HepG2 (cell line): ENCODE measurements at regions of chr4 and their contacts with region 1.

Region 1: GRCh38 chr4:185591679-185592141 is 56.4 kb upstream of the PDLIM3 start:
- DNase-seq: peak; percentile 75
- ATAC-seq: peak; percentile 86
- H3K4me3 ChIP-seq: no peak overlapping the region
- H3K27ac ChIP-seq: peak overlapping the region; percentile 51
- H3K4me1 ChIP-seq: peaks cover 18% of the 10 kb centered on the region
- H3K27me3 ChIP-seq: no peaks in the 10 kb centered on the region
- CTCF ChIP-seq: no peak
- EP300 ChIP-seq: peak in 1 of 2 experiments; percentile 36; a peak in 1 of 4 replicates
- POLR2A ChIP-seq: no peak
- RAD21 ChIP-seq: no peak

Region 2: GRCh38 chr4:185479507-185479971 is 112.2 kb before region 1 on chr4:
- CTCF ChIA-PET with region 1: no interaction called
- POLR2A ChIA-PET with region 1: no interaction called
- in situ Hi-C with region 1: loop called (anchors 5 kb)
- intact Hi-C with region 1: no loop called
- DNase-seq: no peak
- ATAC-seq: no peak
- H3K4me3 ChIP-seq: no peak overlapping the region
- H3K27ac ChIP-seq: no peak overlapping the region
- H3K4me1 ChIP-seq: no peaks in the 10 kb centered on the region
- H3K27me3 ChIP-seq: peaks cover 1 to 38% of the 10 kb centered on the region in 2 experiments; a peak in 2 of 5 replicates
- CTCF ChIP-seq: no peak
- EP300 ChIP-seq: no peak
- POLR2A ChIP-seq: no peak
- RAD21 ChIP-seq: no peak

Region 3: DNA sequence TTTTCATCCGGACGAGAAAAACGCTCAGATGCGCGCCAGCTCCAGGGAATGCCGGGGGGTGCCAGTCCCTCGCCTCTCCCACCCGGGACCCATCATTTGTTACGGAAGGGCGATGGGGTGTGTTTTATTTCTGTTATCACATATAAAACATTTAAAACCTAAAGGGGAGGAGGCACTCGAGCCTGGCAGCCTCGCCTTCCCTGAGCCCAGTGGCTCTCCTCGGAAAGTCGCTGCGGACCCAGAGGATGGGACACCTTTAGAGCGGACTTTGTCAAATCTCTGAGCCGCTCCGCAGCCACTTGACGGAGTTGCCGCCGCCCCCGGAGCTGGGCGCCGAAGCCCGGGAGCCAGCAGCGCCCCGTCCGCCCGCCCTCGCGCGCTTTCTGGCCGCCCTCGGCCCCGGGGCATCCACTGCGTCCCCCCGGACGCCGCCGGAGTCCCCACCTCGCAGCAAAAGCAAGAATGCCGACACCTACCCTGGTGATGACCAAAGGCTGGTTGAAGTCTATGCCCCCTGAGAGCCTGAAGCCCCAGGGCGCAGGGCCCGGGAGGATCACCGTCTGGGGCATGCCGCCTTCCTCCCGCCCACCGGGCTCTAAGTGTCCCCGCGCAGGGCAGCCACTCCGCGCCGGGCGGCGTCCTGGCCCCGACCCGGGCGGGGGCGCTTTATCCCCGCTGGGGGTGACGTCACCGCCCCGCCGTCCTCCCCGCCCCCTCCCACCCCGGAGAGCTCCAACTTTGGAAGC is 56.7 kb before region 1 on chr4 and contains the start of gene PDLIM3:
- CTCF ChIA-PET with region 1: no interaction called
- POLR2A ChIA-PET with region 1: interaction called, 3 read pairs
- in situ Hi-C with region 1: no loop called
- intact Hi-C with region 1: loop called (anchors 5 kb)
- DNase-seq: peak; percentile 27
- ATAC-seq: peak; percentile 88
- H3K4me3 ChIP-seq: peak within 1 kb of the TSS; percentile 55 to 85 (median 66)
- H3K27ac ChIP-seq: peak within 1 kb of the TSS; percentile 46
- H3K4me1 ChIP-seq: peaks cover 12% of the 10 kb centered on the region
- H3K27me3 ChIP-seq: peaks cover 2 to 45% of the 10 kb centered on the region in 2 experiments
- CTCF ChIP-seq: peak; percentile 15; the same call in 1 of the 2 replicates
- EP300 ChIP-seq: no peak
- POLR2A ChIP-seq: peak in 1 of 2 experiments; percentile 46; a peak in 2 of 4 replicates
- RAD21 ChIP-seq: no peak
- total RNA-seq, gene PDLIM3: 5.9 and 6.3 TPM in 2 replicates

Region 4: GRCh38 chr4:185640811-185641675 is 49.3 kb after region 1 on chr4:
- CTCF ChIA-PET with region 1: no interaction called
- POLR2A ChIA-PET with region 1: no interaction called
- in situ Hi-C with region 1: no loop called
- intact Hi-C with region 1: no loop called
- DNase-seq: peak; percentile 76
- ATAC-seq: 0 out of 3 replicates have a peak, but pooled peaks have one; percentile 33
- H3K4me3 ChIP-seq: no peak overlapping the region
- H3K27ac ChIP-seq: no peak overlapping the region
- H3K4me1 ChIP-seq: no peaks in the 10 kb centered on the region
- H3K27me3 ChIP-seq: no peaks in the 10 kb centered on the region; a peak in 1 of 5 replicates
- CTCF ChIP-seq: peak; percentile 51
- EP300 ChIP-seq: no peak
- POLR2A ChIP-seq: no peak
- RAD21 ChIP-seq: no peak; the same call in 1 of the 2 replicates

Region 5: GRCh38 chr4:185792384-185793115 is 200.8 kb after region 1 on chr4:
- CTCF ChIA-PET with region 1: no interaction called
- POLR2A ChIA-PET with region 1: no interaction called
- in situ Hi-C with region 1: no loop called
- intact Hi-C with region 1: no loop called
- DNase-seq: peak; percentile 95
- ATAC-seq: peak; percentile 94
- H3K4me3 ChIP-seq: no peak overlapping the region
- H3K27ac ChIP-seq: peak overlapping the region; percentile 68
- H3K4me1 ChIP-seq: peaks cover 43% of the 10 kb centered on the region
- H3K27me3 ChIP-seq: no peaks in the 10 kb centered on the region
- CTCF ChIP-seq: no peak
- EP300 ChIP-seq: peak in 1 of 2 experiments; percentile 73; a peak in 2 of 4 replicates
- POLR2A ChIP-seq: no peak
- RAD21 ChIP-seq: no peak